ENCODE measurements at regions of chr5 and their contacts with region 1.

Region 1: GRCh38 chr5:8954801-8955200 is 591.1 kb downstream of the SEMA5A start:
- DNase-seq: no peak
- ATAC-seq: no peak
- H3K4me3 ChIP-seq: no peak overlapping the region
- H3K27ac ChIP-seq: no peak overlapping the region
- H3K4me1 ChIP-seq: no peaks in the 10 kb centered on the region
- H3K27me3 ChIP-seq: no peaks in the 10 kb centered on the region
- CTCF ChIP-seq: peak in 2 of 9 donors; percentile 6 to 18

Region 2: DNA sequence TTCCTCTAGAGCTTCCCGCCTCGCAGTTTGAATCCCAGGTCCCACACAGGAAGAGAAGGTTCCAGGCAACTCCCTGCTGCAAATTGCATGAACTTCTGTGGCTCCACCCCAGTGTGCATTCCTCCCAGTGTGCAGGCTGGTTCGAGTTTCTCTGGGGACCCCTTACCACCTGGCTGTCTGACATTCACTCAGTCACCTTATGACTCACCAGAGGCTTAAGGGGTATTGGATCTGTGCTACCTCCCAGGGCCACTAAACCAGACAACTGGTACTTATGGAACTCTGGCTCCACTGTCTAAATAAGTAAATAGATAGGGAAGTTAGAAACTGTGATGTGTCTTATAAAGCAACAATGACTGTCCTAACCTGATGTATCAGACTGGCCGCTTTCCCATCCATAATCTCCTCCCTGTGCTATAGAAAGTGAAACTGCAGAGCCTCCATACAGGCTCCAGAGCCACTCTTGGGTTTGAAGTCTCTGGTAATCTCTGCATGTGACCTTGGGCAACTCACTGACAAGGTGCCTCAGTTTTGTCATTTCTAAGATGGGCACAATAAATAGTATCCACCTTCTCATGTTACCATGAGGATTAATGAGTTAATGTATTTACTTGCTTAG is 129.6 kb before region 1 on chr5:
- intact Hi-C with region 1: no loop called
- DNase-seq: no peak
- ATAC-seq: no peak
- H3K4me3 ChIP-seq: no peak overlapping the region
- H3K27ac ChIP-seq: no peak overlapping the region
- H3K4me1 ChIP-seq: peaks cover 0 to 14% (median 0%) of the 10 kb centered on the region in 9 donors
- H3K27me3 ChIP-seq: no peaks in the 10 kb centered on the region
- CTCF ChIP-seq: no peak

Region 3: DNA sequence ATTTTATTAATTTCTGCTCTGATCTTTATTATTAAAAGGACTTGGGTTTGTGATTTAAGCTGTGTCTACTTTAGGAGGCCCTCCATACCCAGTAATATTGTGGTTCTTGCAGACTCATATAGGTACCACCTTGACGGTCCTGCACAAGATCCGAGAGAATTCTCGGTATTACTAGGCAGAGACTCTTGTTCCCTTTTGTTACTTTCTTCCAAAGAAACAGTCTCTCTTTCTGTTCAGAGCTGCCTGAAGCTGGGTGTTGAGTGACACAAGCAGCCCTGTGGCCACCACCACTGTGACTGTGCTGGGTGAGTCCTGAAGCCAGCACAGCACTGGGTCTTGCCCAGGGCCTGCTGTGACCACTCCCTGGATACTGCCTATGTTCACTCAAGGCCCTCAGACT is 75.6 kb before region 1 on chr5:
- intact Hi-C with region 1: no loop called
- DNase-seq: no peak
- ATAC-seq: no peak
- H3K4me3 ChIP-seq: no peak overlapping the region
- H3K27ac ChIP-seq: no peak overlapping the region
- H3K4me1 ChIP-seq: no peaks in the 10 kb centered on the region
- H3K27me3 ChIP-seq: no peaks in the 10 kb centered on the region
- CTCF ChIP-seq: no peak

Region 4: DNA sequence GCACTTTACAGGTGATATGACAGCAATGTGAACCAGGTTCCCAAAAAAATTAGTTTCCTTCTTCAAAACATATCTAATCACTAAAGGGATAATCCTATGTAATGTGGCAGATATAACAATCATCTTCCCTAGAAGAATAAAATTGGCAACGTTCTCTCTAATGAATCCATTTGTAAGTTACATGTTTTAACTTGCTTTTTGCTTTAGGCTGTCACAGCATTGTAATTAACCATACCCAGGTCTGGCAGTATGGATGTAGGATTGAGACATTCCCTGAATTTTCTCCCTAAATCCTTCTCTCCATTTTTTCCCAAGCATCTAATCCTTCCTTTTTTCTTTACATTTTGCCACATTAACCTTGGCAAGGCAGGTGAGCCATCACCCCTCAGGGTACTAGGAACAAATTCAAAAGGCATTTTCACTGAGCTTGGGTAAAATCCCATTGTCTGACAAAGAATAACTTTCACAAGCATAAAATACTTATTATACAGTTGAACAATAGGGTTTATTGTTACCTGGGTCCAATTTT is 42.8 kb after region 1 on chr5:
- intact Hi-C with region 1: loop called in 1 of 10 experiments (anchors 1 kb)
- DNase-seq: no peak
- ATAC-seq: no peak
- H3K4me3 ChIP-seq: no peak overlapping the region
- H3K27ac ChIP-seq: no peak overlapping the region
- H3K4me1 ChIP-seq: no peaks in the 10 kb centered on the region
- H3K27me3 ChIP-seq: no peaks in the 10 kb centered on the region
- CTCF ChIP-seq: no peak

Measured in heart right ventricle (tissue), 16 donors.